PC-9 (cell line): ENCODE measurements at regions of chr1 and their contacts with region 1.

Region 1: GRCh38 chr1:55071477-55071876 is 32.1 kb downstream of the PCSK9 start:
- DNase-seq: peak in 1 of 2 experiments; percentile 52
- H3K4me3 ChIP-seq: no peak overlapping the region
- H3K27ac ChIP-seq: no peak overlapping the region
- H3K4me1 ChIP-seq: no peaks in the 10 kb centered on the region
- H3K27me3 ChIP-seq: no peaks in the 10 kb centered on the region
- CTCF ChIP-seq: peak; percentile 60; the same call in 1 of the 2 replicates

Region 2: GRCh38 chr1:55107101-55107500 is 35.6 kb after region 1 on chr1:
- CTCF ChIA-PET with region 1: no interaction called
- POLR2A ChIA-PET with region 1: no interaction called
- intact Hi-C with region 1: loop called (anchors 5 kb)
- DNase-seq: no peak
- H3K4me3 ChIP-seq: no peak overlapping the region
- H3K27ac ChIP-seq: no peak overlapping the region
- H3K4me1 ChIP-seq: no peaks in the 10 kb centered on the region
- H3K27me3 ChIP-seq: no peaks in the 10 kb centered on the region
- CTCF ChIP-seq: no peak

Region 3: DNA sequence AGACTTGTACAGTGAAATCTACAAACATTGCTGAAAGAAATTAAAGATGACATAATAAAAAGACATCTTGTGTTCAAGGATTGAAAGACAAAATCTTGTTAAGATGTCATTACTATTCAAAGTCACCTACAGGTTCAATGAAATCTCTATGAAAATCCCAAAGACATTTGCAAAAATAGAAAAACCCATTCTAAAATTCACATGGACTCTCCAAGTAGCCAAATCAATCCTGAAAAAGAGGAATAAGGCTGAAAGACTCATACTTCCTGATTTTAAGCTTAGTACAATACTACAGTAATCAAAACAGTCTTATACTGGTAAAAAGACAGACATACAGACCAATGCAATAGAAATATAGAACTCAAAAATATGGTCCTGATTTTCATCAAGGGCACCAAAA is 46.5 kb after region 1 on chr1:
- CTCF ChIA-PET with region 1: no interaction called
- POLR2A ChIA-PET with region 1: no interaction called
- intact Hi-C with region 1: no loop called
- DNase-seq: no peak
- H3K4me3 ChIP-seq: no peak overlapping the region
- H3K27ac ChIP-seq: no peak overlapping the region
- H3K4me1 ChIP-seq: no peaks in the 10 kb centered on the region
- H3K27me3 ChIP-seq: no peaks in the 10 kb centered on the region
- CTCF ChIP-seq: no peak

Region 4: GRCh38 chr1:55420929-55421716 is 349.6 kb after region 1 on chr1:
- CTCF ChIA-PET with region 1: no interaction called
- POLR2A ChIA-PET with region 1: no interaction called
- intact Hi-C with region 1: no loop called
- DNase-seq: peak; percentile 33 to 84
- H3K4me3 ChIP-seq: no peak overlapping the region
- H3K27ac ChIP-seq: peak overlapping the region; percentile 76
- H3K4me1 ChIP-seq: peaks cover 22% of the 10 kb centered on the region
- H3K27me3 ChIP-seq: no peaks in the 10 kb centered on the region
- CTCF ChIP-seq: no peak